Naive thymus-derived CD4-positive, alpha-beta T cell (primary cell): ENCODE measurements at regions of chr16 and their contacts with region 1.

Region 1: DNA sequence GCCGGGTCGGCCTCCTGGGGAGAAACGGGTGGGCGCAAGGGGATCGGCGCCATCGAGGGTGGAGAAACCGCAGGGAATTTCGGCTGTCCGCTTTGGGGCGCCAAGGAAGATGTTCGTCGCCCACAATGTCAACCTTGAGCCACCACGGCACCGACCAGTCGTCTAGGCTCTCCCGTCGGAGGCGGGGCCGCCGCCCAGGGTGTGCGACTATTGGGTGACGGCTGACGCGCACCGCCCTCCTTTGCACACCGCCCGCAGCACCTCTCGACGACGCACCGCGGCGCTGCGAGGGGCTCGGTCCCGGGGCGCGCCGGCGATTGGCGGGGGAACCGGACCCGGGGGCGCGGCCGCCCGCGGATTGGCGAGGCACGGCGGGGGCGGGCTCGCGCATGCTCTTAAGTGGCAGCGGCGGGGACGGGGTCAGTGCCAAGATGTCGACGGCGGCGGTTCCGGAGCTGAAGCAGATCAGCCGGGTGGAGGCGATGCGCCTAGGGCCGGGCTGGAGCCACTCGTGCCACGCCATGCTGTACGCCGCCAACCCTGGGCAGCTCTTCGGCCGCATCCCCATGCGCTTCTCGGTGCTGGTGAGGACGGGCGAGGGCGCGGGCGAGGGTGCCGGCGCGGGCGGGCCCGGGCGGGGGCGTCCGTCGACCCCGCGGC is at the start of gene NUDT16L1:
- DNase-seq: peak; percentile 95 to 99 (median 98)
- ATAC-seq: peak; percentile 97
- H3K4me3 ChIP-seq: peak within 1 kb of the TSS; percentile 93
- H3K4me3 Mint-ChIP-seq: peak within 1 kb of the TSS; percentile 78 to 91 (median 86)
- H3K27ac ChIP-seq: peak within 1 kb of the TSS; percentile 93
- H3K27ac Mint-ChIP-seq: peak within 1 kb of the TSS; percentile 73 to 93 (median 88)
- H3K4me1 ChIP-seq: peaks cover 14% of the 10 kb centered on the region in 2 donors
- H3K4me1 Mint-ChIP-seq: peaks cover 8 to 23% (median 14%) of the 10 kb centered on the region in 7 donors
- H3K27me3 ChIP-seq: no peaks in the 10 kb centered on the region
- H3K27me3 Mint-ChIP-seq: no peaks in the 10 kb centered on the region
- total RNA-seq, gene NUDT16L1: 42.8 to 65.4 (median 53.3) TPM

Region 2: DNA sequence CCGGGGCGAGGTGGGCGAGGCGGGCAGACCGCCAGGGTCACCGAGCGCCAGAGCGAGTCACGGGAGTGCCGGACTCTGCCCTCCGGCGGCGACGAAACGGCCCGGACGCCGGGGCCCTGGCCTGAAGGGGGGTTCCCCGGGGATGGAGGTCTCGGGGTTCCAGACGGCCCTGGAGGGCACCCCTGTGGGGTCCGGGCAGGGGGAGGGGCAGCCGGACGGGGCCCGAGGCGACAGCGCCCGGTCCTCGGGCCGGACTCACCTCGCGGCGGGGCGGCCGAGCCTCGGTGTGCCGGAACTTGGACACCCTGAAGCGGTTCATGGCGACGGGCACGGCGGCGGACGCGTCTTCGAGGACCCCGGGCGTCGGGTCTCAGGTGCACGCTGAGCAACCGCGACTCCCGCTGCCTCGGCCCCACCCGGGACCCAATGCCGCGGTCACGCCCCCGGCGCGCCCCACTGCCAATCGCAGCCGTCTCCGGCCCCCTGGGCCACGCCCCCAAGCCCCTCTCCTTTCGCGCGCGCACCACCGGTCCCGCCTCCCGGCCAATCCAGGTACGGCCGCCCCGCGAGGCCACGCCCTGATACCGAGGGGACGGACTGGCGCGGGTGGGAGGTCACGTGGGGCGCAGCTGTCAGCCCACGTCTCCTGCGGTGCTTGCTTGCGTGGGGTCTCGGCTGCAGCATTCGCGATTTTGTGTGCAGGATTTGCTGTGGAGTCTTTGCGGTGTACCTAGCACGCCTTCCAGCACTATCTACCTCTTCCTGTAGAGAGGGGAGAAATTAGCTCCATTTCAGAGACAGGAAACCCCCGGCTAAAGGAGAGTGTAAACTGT is 277.0 kb before region 1 on chr16 and contains the start of gene CORO7:
- CTCF ChIA-PET with region 1: no interaction called
- POLR2A ChIA-PET with region 1: no interaction called
- intact Hi-C with region 1: loop called in 1 of 2 experiments (anchors 2 kb)
- DNase-seq: peak; percentile 98 to 100 (median 99)
- ATAC-seq: peak; percentile 89
- H3K4me3 ChIP-seq: peak within 1 kb of the TSS; percentile 71
- H3K4me3 Mint-ChIP-seq: peak within 1 kb of the TSS; percentile 88 to 98 (median 95)
- H3K27ac ChIP-seq: peak within 1 kb of the TSS; percentile 98
- H3K27ac Mint-ChIP-seq: peak within 1 kb of the TSS; percentile 91 to 99 (median 98)
- H3K4me1 ChIP-seq: peaks cover 26 to 33% of the 10 kb centered on the region in 2 donors
- H3K4me1 Mint-ChIP-seq: peaks cover 18 to 43% (median 38%) of the 10 kb centered on the region in 7 donors
- H3K27me3 ChIP-seq: no peaks in the 10 kb centered on the region
- H3K27me3 Mint-ChIP-seq: peaks cover 0 to 9% (median 0%) of the 10 kb centered on the region in 5 donors
- total RNA-seq, gene CORO7: 114 to 572 (median 165) TPM

Region 3: DNA sequence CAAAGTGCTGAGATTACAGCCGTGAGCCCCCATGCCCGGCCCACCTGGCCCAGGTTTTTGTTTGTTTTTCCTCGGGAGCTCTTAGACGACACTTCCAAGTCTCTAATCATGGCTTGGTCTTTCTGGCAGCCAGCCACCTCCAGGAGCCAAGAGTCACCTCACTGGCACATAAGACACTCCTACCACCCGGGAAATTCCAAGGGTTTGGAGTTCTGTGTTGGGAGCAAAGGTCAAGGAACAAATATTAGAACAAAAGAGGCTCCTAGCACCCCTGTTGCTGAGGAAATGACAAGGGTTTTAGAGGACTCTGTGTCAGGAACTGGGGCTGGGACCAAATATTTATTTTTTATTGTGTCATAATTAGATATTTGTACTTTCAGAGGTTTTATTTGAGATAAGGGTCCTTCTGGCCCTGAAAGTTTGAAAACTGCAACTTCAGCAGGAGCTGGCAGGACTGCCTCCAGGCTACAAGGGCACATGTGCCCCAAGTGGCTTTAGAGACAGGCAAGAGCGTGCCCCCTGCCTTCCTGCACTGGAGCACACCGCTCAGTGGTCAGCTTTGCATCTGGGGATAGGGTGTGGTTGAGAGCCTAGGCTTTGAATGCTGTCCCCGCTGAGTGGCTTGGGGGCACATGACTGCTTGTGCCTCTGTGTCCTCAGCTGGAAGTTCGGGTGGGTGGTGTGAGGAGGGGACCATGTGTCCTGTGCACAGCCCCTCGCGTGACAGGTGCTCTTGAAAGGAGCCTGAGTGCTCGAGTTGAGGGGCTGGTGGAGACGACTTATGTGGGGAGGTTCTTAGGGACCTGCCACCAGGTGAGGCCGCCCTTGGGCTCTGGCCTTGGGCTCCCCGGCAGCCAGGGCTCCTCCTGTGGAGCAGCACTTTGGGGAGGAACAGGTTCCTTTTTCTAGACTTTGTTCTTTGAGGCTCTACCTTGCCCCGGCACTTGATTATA is 39.1 kb before region 1 on chr16:
- CTCF ChIA-PET with region 1: interaction called, 7 read pairs
- POLR2A ChIA-PET with region 1: interaction called, 3 read pairs
- intact Hi-C with region 1: loop called in 1 of 2 experiments (anchors 2 kb)
- DNase-seq: no peak
- ATAC-seq: no peak
- H3K4me3 ChIP-seq: no peak overlapping the region
- H3K4me3 Mint-ChIP-seq: no peak overlapping the region
- H3K27ac ChIP-seq: no peak overlapping the region
- H3K27ac Mint-ChIP-seq: peak overlapping the region in 2 of 9 donors; percentile 30 to 51
- H3K4me1 ChIP-seq: peaks cover 0 to 17% of the 10 kb centered on the region in 2 donors
- H3K4me1 Mint-ChIP-seq: peaks cover 17 to 34% (median 24%) of the 10 kb centered on the region in 7 donors
- H3K27me3 ChIP-seq: no peaks in the 10 kb centered on the region
- H3K27me3 Mint-ChIP-seq: no peaks in the 10 kb centered on the region

Region 4: GRCh38 chr16:4675864-4676786 is 17.3 kb before region 1 on chr16:
- CTCF ChIA-PET with region 1: no interaction called
- POLR2A ChIA-PET with region 1: interaction called, 6 read pairs
- intact Hi-C with region 1: loop called (anchors 1 to 2 kb)
- DNase-seq: peak in 8 of 9 donors; percentile 62 to 80 (median 76)
- ATAC-seq: peak; percentile 82
- H3K4me3 ChIP-seq: peak overlapping the region; percentile 32
- H3K4me3 Mint-ChIP-seq: peak overlapping the region; percentile 57 to 86 (median 84)
- H3K27ac ChIP-seq: peak overlapping the region; percentile 78
- H3K27ac Mint-ChIP-seq: peak overlapping the region; percentile 92 to 99 (median 98)
- H3K4me1 ChIP-seq: peaks cover 19 to 28% of the 10 kb centered on the region in 2 donors
- H3K4me1 Mint-ChIP-seq: peaks cover 29 to 36% (median 31%) of the 10 kb centered on the region in 7 donors
- H3K27me3 ChIP-seq: no peaks in the 10 kb centered on the region
- H3K27me3 Mint-ChIP-seq: no peaks in the 10 kb centered on the region

Region 5: GRCh38 chr16:4766874-4767628 is 73.6 kb after region 1 on chr16 and contains the start of gene ZNF500:
- CTCF ChIA-PET with region 1: no interaction called
- POLR2A ChIA-PET with region 1: no interaction called
- intact Hi-C with region 1: loop called (anchors 1 to 2 kb)
- DNase-seq: peak; percentile 90 to 98 (median 92)
- ATAC-seq: peak; percentile 99
- H3K4me3 ChIP-seq: peak within 1 kb of the TSS; percentile 82
- H3K4me3 Mint-ChIP-seq: peak within 1 kb of the TSS; percentile 90 to 94 (median 92)
- H3K27ac ChIP-seq: peak within 1 kb of the TSS; percentile 84
- H3K27ac Mint-ChIP-seq: peak within 1 kb of the TSS; percentile 86 to 96 (median 92)
- H3K4me1 ChIP-seq: peaks cover 17 to 19% of the 10 kb centered on the region in 2 donors
- H3K4me1 Mint-ChIP-seq: peaks cover 24 to 49% (median 34%) of the 10 kb centered on the region in 7 donors
- H3K27me3 ChIP-seq: no peaks in the 10 kb centered on the region
- H3K27me3 Mint-ChIP-seq: no peaks in the 10 kb centered on the region
- total RNA-seq, gene ZNF500: 13.8 to 43.0 (median 24.7) TPM

Region 6: GRCh38 chr16:4846891-4847773 is 153.7 kb after region 1 on chr16 and contains the starts of genes GLYR1 and UBN1:
- CTCF ChIA-PET with region 1: no interaction called
- POLR2A ChIA-PET with region 1: no interaction called
- intact Hi-C with region 1: loop called in 1 of 2 experiments (anchors 1 kb)
- DNase-seq: peak; percentile 99 to 100 (median 99)
- ATAC-seq: peak; percentile 95
- H3K4me3 ChIP-seq: peak within 1 kb of the TSS; percentile 84
- H3K4me3 Mint-ChIP-seq: peak within 1 kb of the TSS; percentile 86 to 96 (median 91)
- H3K27ac ChIP-seq: peak within 1 kb of the TSS; percentile 99
- H3K27ac Mint-ChIP-seq: peak within 1 kb of the TSS; percentile 74 to 94 (median 90)
- H3K4me1 ChIP-seq: peaks cover 30 to 38% of the 10 kb centered on the region in 2 donors
- H3K4me1 Mint-ChIP-seq: peaks cover 52 to 66% (median 58%) of the 10 kb centered on the region in 7 donors
- H3K27me3 ChIP-seq: no peaks in the 10 kb centered on the region
- H3K27me3 Mint-ChIP-seq: no peaks in the 10 kb centered on the region
- total RNA-seq, gene GLYR1: 98.7 to 122 (median 108) TPM
- total RNA-seq, gene UBN1: 39.5 to 58.7 (median 42.4) TPM